HAP-1 (cell line): ENCODE measurements at regions of chr12 and their contacts with region 1.

Region 1: GRCh38 chr12:110468212-110469048 is at the starts of genes FAM216A and GPN3:
- DNase-seq: peak; percentile 97 to 99
- H3K4me3 ChIP-seq: peak within 1 kb of the TSS; percentile 60
- H3K4me1 ChIP-seq: peaks cover 17% of the 10 kb centered on the region
- H3K27me3 ChIP-seq: no peaks in the 10 kb centered on the region

Region 2: GRCh38 chr12:110563702-110564640 is 95.5 kb after region 1 on chr12:
- in situ Hi-C with region 1: no loop called
- DNase-seq: no peak
- H3K4me3 ChIP-seq: no peak overlapping the region
- H3K4me1 ChIP-seq: peaks cover 31% of the 10 kb centered on the region
- H3K27me3 ChIP-seq: no peaks in the 10 kb centered on the region

Region 3: GRCh38 chr12:110600254-110600653 is 131.8 kb after region 1 on chr12:
- in situ Hi-C with region 1: loop called (anchors 10 kb)
- DNase-seq: peak in 1 of 2 experiments; percentile 44
- H3K4me3 ChIP-seq: no peak overlapping the region
- H3K4me1 ChIP-seq: no peaks in the 10 kb centered on the region
- H3K27me3 ChIP-seq: no peaks in the 10 kb centered on the region